ENCODE measurements at regions of chr3 and their contacts with region 1.

Region 1: GRCh38 chr3:152444029-152444641 is 175.4 kb downstream of the MBNL1 start:
- DNase-seq: no peak
- ATAC-seq: peak; percentile 48 to 72

Region 2: GRCh38 chr3:151733613-151734012 is 710.5 kb before region 1 on chr3 and contains the start of gene AADACL2:
- intact Hi-C with region 1: no loop called
- DNase-seq: no peak
- ATAC-seq: no peak
- total RNA-seq, gene AADACL2: not detected

Region 3: GRCh38 chr3:152183473-152183872 is 260.7 kb before region 1 on chr3:
- intact Hi-C with region 1: loop called in 1 of 2 experiments (anchors 10 kb)
- DNase-seq: peak; percentile 43
- ATAC-seq: peak; percentile 67 to 79

Region 4: GRCh38 chr3:152222327-152222726 is 221.8 kb before region 1 on chr3:
- intact Hi-C with region 1: loop called in 1 of 2 experiments (anchors 10 kb)
- DNase-seq: no peak
- ATAC-seq: peak; percentile 82 to 85

Region 5: DNA sequence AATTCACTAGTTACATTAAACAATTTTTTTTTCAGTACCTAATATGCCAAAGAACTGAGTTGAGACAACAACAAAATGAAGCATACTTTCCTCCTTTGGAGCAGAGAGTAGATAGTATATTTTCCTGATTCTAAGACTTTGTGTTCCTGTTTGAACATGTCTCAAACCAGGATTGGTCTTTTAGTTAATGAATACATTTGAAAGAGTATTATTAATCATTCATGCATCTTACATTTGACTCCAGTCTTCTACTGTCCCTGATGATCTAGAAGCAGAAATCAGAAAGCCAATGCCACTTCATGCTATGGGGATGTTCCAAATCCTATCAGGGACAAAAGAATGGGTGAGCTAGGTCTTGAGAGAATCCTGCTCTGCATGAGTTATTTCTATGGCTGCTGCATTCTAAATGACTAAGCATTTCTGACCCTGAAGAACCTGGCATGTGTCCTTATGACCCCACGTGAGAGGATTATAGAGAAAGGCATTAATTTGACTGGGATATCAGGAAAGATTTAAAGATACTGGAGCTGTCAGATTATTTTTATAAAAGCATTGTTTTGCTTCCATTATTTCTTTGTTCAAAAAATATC is 208.3 kb before region 1 on chr3:
- intact Hi-C with region 1: loop called in 1 of 2 experiments (anchors 10 kb)
- DNase-seq: no peak
- ATAC-seq: no peak

Region 6: GRCh38 chr3:152268555-152269425 is 175.3 kb before region 1 on chr3 and contains the start of gene MBNL1:
- intact Hi-C with region 1: loop called in 1 of 2 experiments (anchors 5 kb)
- DNase-seq: peak; percentile 83
- ATAC-seq: peak; percentile 77 to 82
- total RNA-seq, gene MBNL1: 141 to 154 TPM

Measured in left cardiac atrium (tissue), 4 donors.